ENCODE measurements at regions of chr18 and their contacts with region 1.

Region 1: DNA sequence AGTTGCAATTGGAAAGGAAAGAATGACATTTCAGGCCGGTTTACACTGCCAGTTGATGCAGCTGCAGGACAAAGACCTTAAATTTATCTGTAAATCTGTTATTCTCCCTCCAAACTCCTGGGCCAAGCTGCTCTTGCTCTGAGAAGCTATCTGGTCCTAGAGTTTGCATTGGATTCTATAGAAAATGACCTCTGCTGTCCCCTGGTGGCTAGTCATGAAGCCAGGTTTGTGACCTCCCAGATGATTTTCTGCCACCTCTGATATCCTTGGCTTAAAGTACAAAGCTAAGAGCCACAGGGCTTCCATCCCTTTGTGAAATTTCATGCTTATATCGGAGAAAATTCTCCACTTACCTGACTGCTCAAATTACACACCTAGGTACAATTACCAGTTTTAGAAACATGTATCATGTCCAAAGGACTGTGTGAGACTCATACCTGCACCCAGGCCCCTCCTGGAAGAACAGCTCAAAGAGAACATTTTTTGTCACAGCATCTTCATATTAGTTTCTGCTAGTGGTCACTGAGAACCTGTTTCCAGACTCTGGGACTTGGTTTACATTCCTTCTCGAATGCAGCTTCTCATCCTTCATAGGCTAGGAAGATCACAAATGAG is 28.9 kb upstream of the IER3IP1 start:
- H3K4me3 ChIP-seq: no peak overlapping the region
- H3K27ac ChIP-seq: no peak overlapping the region
- H3K4me1 ChIP-seq: no peaks in the 10 kb centered on the region
- CTCF ChIP-seq: peak; percentile 32; the same call in 1 of the 2 replicates

Region 2: DNA sequence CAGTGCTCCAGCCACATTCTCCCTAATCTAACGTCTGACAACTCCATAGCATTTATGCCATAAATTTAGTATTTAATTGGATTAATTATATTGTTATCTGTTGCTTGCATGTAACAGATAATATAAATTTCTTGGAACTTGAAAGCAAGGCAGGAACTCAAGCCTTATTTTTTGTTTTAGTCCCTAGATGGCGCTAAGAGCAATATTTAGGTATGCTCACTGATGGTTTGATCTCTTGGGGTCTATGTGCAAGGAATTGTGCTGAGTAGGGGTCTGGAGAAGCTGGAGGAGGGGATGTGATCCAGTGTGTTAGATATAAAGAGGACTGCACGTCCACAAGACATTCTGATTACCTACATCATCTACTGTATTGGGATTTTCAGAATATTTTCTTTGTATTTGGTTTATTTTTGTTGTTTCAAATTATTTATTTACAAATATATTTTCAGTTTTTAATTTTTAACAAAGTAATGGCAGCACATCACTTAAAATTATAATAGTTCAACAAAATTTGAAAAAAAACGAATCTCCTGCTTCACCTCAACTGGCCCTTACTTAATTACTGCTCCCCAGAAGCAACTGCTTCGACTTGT is 254.9 kb before region 1 on chr18:
- CTCF ChIA-PET with region 1: interaction called, 11 read pairs
- POLR2A ChIA-PET with region 1: no interaction called
- H3K4me3 ChIP-seq: no peak overlapping the region
- H3K27ac ChIP-seq: no peak overlapping the region
- H3K4me1 ChIP-seq: no peaks in the 10 kb centered on the region
- CTCF ChIP-seq: no peak

Region 3: GRCh38 chr18:47100214-47100831 is 104.7 kb before region 1 on chr18:
- CTCF ChIA-PET with region 1: interaction called, 93 read pairs
- POLR2A ChIA-PET with region 1: no interaction called
- H3K4me3 ChIP-seq: no peak overlapping the region
- H3K27ac ChIP-seq: no peak overlapping the region
- H3K4me1 ChIP-seq: no peaks in the 10 kb centered on the region
- CTCF ChIP-seq: peak; percentile 50; the same call in 1 of the 2 replicates

Region 4: GRCh38 chr18:47150029-47150823 is 54.8 kb before region 1 on chr18 and contains the start of gene HDHD2:
- CTCF ChIA-PET with region 1: interaction called, 5 read pairs
- POLR2A ChIA-PET with region 1: interaction called, 13 read pairs
- H3K4me3 ChIP-seq: peak within 1 kb of the TSS; percentile 75
- H3K27ac ChIP-seq: peak within 1 kb of the TSS; percentile 62
- H3K4me1 ChIP-seq: peaks cover 9% of the 10 kb centered on the region
- CTCF ChIP-seq: peak; percentile 66

Region 5: GRCh38 chr18:47215554-47216138 is 10.6 kb after region 1 on chr18:
- CTCF ChIA-PET with region 1: interaction called, 46 read pairs
- POLR2A ChIA-PET with region 1: no interaction called
- H3K4me3 ChIP-seq: no peak overlapping the region
- H3K27ac ChIP-seq: no peak overlapping the region
- H3K4me1 ChIP-seq: no peaks in the 10 kb centered on the region
- CTCF ChIP-seq: peak; percentile 84

Region 6: DNA sequence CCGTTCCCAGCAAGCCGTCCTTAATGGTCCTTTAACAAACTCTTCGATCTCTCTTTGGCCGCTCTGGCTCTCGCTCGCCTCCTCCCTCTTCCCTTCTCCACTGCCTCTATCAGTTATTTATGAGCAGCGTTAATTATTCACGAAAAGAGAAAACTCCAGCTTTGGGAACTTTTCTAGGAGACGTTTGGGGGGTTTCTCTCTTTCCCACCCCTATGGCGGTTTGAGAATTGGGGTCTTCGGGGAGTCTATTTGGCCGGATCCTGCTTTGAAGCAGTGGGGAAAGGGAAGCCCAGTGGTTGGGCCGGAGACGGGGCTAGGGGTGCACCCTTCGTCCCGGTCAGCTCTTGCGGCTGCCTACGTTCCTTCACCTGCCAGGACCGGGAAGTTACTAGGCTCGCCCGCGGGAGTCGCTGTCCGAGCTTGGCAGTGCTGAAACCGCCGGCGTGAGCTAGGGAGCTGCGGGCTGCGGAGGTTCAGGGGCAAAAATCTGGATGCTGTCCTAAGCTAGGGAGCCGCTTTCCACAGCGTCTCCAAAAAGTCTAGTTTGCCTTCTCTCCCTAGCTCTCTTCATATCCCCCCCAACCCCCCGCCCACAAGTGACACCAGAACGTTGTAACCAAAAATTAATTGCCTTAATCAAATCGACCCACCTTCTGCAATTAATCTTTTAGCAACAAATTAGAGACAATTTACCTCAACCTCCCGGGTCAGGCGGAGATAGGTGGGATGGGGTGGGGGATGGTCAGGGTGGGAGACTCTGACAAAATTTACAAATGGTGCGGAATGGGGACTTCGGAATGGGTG is 55.3 kb after region 1 on chr18:
- CTCF ChIA-PET with region 1: no interaction called
- POLR2A ChIA-PET with region 1: no interaction called
- H3K4me3 ChIP-seq: no peak overlapping the region
- H3K27ac ChIP-seq: no peak overlapping the region
- H3K4me1 ChIP-seq: no peaks in the 10 kb centered on the region
- CTCF ChIP-seq: no peak

Region 7: GRCh38 chr18:47334966-47335365 is 130.0 kb after region 1 on chr18:
- CTCF ChIA-PET with region 1: no interaction called
- POLR2A ChIA-PET with region 1: no interaction called
- H3K4me3 ChIP-seq: no peak overlapping the region
- H3K27ac ChIP-seq: no peak overlapping the region
- H3K4me1 ChIP-seq: no peaks in the 10 kb centered on the region
- CTCF ChIP-seq: no peak

Region 8: GRCh38 chr18:47756364-47757016 is 551.5 kb after region 1 on chr18:
- CTCF ChIA-PET with region 1: interaction called, 20 read pairs
- POLR2A ChIA-PET with region 1: no interaction called
- H3K4me3 ChIP-seq: no peak overlapping the region
- H3K27ac ChIP-seq: no peak overlapping the region
- H3K4me1 ChIP-seq: no peaks in the 10 kb centered on the region
- CTCF ChIP-seq: peak; percentile 72; the same call in 1 of the 2 replicates

Region 9: GRCh38 chr18:47795434-47795814 is 590.4 kb after region 1 on chr18:
- CTCF ChIA-PET with region 1: no interaction called
- POLR2A ChIA-PET with region 1: no interaction called
- H3K4me3 ChIP-seq: no peak overlapping the region
- H3K27ac ChIP-seq: no peak overlapping the region
- H3K4me1 ChIP-seq: no peaks in the 10 kb centered on the region
- CTCF ChIP-seq: no peak

Measured in HEK293 (cell line).